ENCODE measurements at regions of chr5 and their contacts with region 1.

Region 1: GRCh38 chr5:76402886-76403765 is at the start of gene IQGAP2:
- DNase-seq: peak; percentile 65 to 82 (median 75)
- H3K4me3 ChIP-seq: peak within 1 kb of the TSS; percentile 16 to 91 (median 60)
- H3K27ac ChIP-seq: peak within 1 kb of the TSS in 4 of 5 donors; percentile 64 to 92 (median 83)
- H3K4me1 ChIP-seq: peaks cover 9 to 37% of the 10 kb centered on the region in 2 donors
- H3K27me3 ChIP-seq: no peaks in the 10 kb centered on the region
- CTCF ChIP-seq: peak; percentile 37 to 83 (median 64)
- POLR2A ChIP-seq: peak; percentile 36 to 48
- total RNA-seq, gene IQGAP2: 19.3 to 77.3 (median 49.1) TPM

Region 2: GRCh38 chr5:76074487-76075065 is 328.6 kb before region 1 on chr5:
- intact Hi-C with region 1: no loop called
- DNase-seq: peak in 2 of 7 donors; percentile 19 to 26
- H3K4me3 ChIP-seq: no peak overlapping the region
- H3K27ac ChIP-seq: no peak overlapping the region
- H3K4me1 ChIP-seq: no peaks in the 10 kb centered on the region
- H3K27me3 ChIP-seq: peaks cover 12% of the 10 kb centered on the region
- CTCF ChIP-seq: peak; percentile 33 to 68 (median 54)
- POLR2A ChIP-seq: no peak

Region 3: GRCh38 chr5:76479973-76480667 is 77.0 kb after region 1 on chr5:
- intact Hi-C with region 1: no loop called
- DNase-seq: no peak
- H3K4me3 ChIP-seq: no peak overlapping the region
- H3K27ac ChIP-seq: no peak overlapping the region
- H3K4me1 ChIP-seq: peaks cover 0 to 4% of the 10 kb centered on the region in 2 donors
- H3K27me3 ChIP-seq: no peaks in the 10 kb centered on the region
- CTCF ChIP-seq: no peak
- POLR2A ChIP-seq: no peak

Region 4: DNA sequence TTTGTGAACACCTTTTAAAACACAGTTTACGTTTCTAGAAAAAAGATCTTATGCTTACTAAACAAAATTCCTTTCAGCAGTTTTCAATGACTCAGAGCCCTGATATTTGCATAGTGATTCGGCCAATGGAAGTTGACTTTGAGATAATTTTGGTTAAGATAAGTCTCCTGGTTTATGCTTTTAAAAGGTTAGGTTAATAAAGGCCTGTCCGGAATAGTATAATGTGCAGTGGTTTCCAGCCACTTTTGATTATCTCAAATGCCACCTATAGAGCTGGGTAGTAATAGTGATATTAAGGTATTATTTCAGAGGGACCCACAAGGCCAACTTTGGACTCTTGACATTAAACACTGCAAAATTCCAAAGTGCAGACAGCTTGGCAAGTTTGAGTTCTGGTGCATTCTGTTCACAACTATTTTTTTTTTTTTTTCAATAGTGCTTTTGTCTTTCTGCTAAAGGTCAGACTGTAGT is 134.0 kb after region 1 on chr5:
- intact Hi-C with region 1: loop called (anchors 5 to 10 kb)
- DNase-seq: no peak
- H3K4me3 ChIP-seq: no peak overlapping the region
- H3K27ac ChIP-seq: peak overlapping the region in 1 of 5 donors; percentile 20
- H3K4me1 ChIP-seq: peaks cover 5 to 11% of the 10 kb centered on the region in 2 donors
- H3K27me3 ChIP-seq: no peaks in the 10 kb centered on the region
- CTCF ChIP-seq: no peak
- POLR2A ChIP-seq: no peak

Region 5: GRCh38 chr5:76544268-76544926 is 141.3 kb after region 1 on chr5:
- intact Hi-C with region 1: loop called (anchors 5 to 10 kb)
- DNase-seq: peak in 6 of 7 donors; percentile 38 to 74 (median 55)
- H3K4me3 ChIP-seq: no peak overlapping the region
- H3K27ac ChIP-seq: peak overlapping the region in 2 of 5 donors; percentile 37 to 41
- H3K4me1 ChIP-seq: peaks cover 6 to 45% of the 10 kb centered on the region in 2 donors
- H3K27me3 ChIP-seq: no peaks in the 10 kb centered on the region
- CTCF ChIP-seq: peak; percentile 41 to 67 (median 57)
- POLR2A ChIP-seq: no peak